ENCODE measurements at regions of chr5 and their contacts with region 1.

Region 1: DNA sequence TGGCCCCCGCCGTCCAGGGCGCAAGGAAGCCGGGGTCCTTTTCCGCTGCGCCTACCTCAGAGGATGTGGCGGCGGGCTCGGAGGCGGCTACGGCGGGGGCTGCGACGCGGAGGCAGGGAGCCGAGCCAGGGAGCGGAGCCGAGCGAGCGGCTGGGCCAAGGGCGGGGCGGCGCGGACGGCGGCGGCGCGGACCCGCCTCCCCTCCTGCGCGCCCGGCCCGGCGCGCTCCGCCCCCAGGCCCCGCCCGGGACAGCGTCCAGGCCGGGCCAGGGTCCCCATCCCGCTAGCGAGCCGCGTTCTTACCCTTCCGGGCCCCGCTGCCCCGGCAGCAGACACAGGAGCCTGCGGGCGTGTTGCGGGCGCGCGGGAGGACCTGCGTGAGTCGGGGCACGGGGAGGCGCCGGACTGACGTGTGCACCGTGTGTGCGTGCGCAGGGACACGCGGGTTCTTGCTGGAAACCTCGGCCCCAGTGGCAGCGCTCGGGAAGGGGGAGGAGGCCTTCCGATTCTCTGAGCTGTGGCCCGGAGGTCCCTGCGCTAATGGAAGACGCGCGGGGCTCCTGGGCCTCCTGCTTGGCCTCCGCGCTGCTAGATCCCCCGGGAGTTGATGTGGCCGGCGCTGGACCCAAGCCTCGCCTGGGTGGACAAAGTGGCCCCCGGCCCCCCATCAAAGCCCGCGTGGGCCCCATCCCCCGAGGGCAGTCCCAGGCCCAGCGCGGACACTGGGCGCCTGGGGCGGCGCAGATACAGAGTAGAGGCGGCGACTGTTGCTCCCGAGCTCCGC is at the start of gene VDAC1:
- DNase-seq: peak; percentile 92
- ATAC-seq: peak; percentile 85
- H3K4me3 Mint-ChIP-seq: peak within 1 kb of the TSS; percentile 94
- H3K27ac Mint-ChIP-seq: peak within 1 kb of the TSS; percentile 98
- H3K4me1 Mint-ChIP-seq: peaks cover 44% of the 10 kb centered on the region
- H3K27me3 Mint-ChIP-seq: no peaks in the 10 kb centered on the region
- total RNA-seq, gene VDAC1: 482 to 486 TPM

Region 2: DNA sequence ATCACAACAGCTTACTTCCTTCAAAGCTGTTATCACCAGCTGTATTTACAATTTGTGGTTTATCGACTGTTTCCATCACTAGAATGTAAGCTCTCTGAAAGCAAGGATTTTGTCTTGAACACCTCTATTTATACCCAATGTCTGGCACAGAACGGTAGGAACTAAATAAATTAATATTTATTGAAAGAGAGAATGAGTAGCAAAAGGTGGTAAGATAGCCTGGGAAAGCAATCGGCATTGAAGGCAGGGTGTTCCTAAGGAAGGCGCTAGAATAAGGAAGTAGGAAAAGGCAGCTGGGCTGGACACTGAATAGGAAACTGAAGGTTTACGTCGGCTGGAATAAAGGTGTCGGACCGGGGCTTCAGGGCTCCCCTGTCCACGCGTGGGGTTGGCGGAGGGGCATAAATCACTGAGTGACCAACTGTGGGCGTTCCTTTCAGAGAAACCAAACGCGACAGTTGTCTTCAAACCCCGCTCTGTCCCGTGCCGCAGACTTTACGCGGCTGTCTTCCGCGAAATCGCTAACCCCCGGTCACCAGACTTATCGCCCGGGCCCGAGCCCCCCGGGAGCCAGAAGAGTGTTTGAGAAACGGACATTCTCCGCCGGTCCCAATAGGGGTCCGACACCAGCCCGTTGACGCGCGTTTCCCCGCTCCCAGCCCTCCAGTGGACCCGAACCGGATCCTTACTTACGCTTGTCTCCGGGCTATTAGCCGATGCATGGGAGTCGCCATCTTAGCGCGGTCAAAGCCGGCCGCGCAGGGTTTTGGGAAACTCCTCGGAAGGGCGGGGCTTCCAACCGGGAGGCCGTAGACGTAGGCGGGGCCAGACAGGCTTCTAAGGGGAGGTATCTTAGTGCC is 978.8 kb before region 1 on chr5 and contains the start of gene ZCCHC10:
- CTCF ChIA-PET with region 1: no interaction called
- POLR2A ChIA-PET with region 1: no interaction called
- intact Hi-C with region 1: loop called in 1 of 2 experiments (anchors 1 kb)
- DNase-seq: peak; percentile 96
- ATAC-seq: peak; percentile 100
- H3K4me3 Mint-ChIP-seq: peak within 1 kb of the TSS; percentile 94
- H3K27ac Mint-ChIP-seq: peak within 1 kb of the TSS; percentile 91
- H3K4me1 Mint-ChIP-seq: peaks cover 17% of the 10 kb centered on the region
- H3K27me3 Mint-ChIP-seq: no peaks in the 10 kb centered on the region
- total RNA-seq, gene ZCCHC10: 25.7 to 32.2 TPM

Region 3: DNA sequence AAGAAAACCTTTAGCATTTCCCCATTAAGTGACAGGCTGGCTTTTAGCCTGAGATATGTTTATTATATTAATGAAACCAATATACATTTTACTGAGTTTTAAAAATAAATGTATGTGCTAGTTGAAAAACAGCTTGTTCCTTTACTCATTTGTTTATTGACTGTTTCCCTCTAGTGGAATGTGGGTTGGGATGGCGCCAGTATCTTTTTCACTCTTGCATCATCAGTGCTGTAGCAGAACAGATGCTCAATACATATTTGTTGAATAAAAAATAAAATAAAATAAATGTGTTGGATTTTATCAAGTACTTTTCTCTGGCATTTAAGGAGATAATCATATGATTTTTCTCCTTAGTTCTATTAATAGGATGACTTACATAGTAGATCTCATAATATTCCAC is 435.4 kb before region 1 on chr5:
- CTCF ChIA-PET with region 1: no interaction called
- POLR2A ChIA-PET with region 1: no interaction called
- intact Hi-C with region 1: no loop called
- DNase-seq: no peak
- ATAC-seq: no peak
- H3K4me3 Mint-ChIP-seq: no peak overlapping the region
- H3K27ac Mint-ChIP-seq: no peak overlapping the region
- H3K4me1 Mint-ChIP-seq: no peaks in the 10 kb centered on the region
- H3K27me3 Mint-ChIP-seq: peaks cover 28% of the 10 kb centered on the region

Region 4: GRCh38 chr5:134070725-134071613 is 66.2 kb after region 1 on chr5:
- CTCF ChIA-PET with region 1: no interaction called
- POLR2A ChIA-PET with region 1: no interaction called
- intact Hi-C with region 1: loop called in 1 of 2 experiments (anchors 2 kb)
- DNase-seq: peak; percentile 77
- ATAC-seq: peak; percentile 1
- H3K4me3 Mint-ChIP-seq: peak overlapping the region; percentile 73
- H3K27ac Mint-ChIP-seq: peak overlapping the region; percentile 89
- H3K4me1 Mint-ChIP-seq: peaks cover 68% of the 10 kb centered on the region
- H3K27me3 Mint-ChIP-seq: no peaks in the 10 kb centered on the region

Region 5: DNA sequence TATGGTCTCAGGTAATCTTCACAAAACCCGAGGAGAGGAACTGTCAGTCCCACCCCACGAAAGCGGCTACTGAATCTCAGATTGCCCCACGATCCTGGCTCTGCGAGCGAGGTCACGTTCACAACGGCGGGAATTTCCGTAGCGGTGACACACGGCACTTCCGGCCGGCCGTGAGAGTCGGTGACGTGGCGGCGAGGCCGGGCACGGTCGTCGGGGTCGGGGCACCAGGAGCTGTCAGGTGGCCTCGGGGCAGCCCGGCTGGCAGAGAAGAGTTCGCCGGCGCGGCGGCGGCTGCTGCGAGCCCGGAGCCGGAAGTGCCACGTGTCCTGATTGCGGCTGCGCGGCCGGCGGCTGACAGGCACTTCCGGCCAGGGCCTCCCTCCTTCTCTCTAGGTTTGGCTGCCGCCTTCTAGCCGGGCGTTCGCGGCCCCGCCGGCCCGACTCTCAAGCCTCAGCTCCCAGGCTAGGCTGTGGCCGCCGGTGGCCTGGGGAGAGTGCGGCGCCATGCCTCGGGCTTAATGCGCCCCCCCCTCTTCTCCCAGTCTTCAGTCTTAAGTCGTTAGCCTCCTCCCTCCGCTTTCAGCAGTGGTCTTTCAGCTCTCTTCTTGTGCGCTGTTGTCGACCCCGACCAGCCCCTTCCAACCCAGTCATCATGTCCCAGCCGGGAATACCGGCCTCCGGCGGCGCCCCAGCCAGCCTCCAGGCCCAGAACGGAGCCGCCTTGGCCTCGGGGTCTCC is 643.8 kb after region 1 on chr5 and contains the start of gene SEC24A:
- CTCF ChIA-PET with region 1: no interaction called
- POLR2A ChIA-PET with region 1: no interaction called
- intact Hi-C with region 1: loop called in 1 of 2 experiments (anchors 1 kb)
- DNase-seq: peak; percentile 96
- ATAC-seq: peak; percentile 88
- H3K4me3 Mint-ChIP-seq: peak within 1 kb of the TSS; percentile 87
- H3K27ac Mint-ChIP-seq: peak within 1 kb of the TSS; percentile 99
- H3K4me1 Mint-ChIP-seq: peaks cover 30% of the 10 kb centered on the region
- H3K27me3 Mint-ChIP-seq: no peaks in the 10 kb centered on the region
- total RNA-seq, gene SEC24A: 32.2 to 41.3 TPM

Measured in activated CD4-positive, alpha-beta T cell treated with anti-CD3 and anti-CD28 coated beads for 36 hours (primary cell).